ENCODE measurements at regions of chr9 and their contacts with region 1.

Region 1: DNA sequence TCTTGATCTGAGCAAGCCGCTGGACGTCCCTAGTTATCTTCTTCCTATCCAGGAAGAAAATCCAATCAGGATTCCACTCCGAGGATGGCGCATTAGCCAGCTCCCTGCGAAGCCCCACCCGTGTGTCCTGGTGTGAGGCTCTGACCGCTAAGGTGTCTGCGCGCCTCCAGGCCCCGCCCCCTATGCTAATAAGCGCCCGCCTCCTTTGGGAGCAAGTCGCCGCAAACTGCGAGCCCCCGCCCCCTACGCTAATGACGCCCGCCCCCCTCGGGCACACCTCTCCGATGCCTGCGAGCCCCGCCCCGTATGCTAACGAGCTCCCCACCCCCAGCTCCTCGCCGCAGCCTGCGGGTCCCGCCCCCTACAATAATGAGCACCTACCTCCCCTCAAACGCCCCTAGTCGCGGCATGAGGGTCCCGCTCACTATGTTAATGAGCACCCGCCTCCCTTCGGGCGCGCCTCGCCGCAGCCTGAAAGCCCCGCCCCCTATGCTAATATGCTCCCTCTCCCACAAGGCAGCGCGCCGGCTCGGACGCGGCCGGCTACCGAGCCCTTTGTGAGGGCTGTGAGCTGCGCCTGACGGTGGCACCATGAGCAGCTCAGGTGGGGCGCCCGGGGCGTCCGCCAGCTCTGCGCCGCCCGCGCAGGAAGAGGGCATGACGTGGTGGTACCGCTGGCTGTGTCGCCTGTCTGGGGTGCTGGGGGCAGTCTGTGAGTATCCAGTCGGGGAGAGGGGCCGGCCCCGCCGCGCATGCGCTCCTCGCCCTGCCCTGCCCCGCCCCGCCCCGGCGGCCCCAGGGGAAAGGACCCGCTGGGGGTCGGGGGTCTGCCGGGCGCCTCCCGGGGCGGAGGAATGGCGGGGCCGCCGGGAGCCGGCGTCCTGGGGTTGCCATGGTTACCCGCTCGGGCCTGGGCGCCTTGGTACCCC is at the start of gene CACFD1:
- DNase-seq: peak; percentile 99
- ATAC-seq: peak; percentile 88
- H3K4me3 Mint-ChIP-seq: peak within 1 kb of the TSS; percentile 82
- H3K27ac Mint-ChIP-seq: peak within 1 kb of the TSS; percentile 96
- H3K4me1 Mint-ChIP-seq: peaks cover 31% of the 10 kb centered on the region
- H3K27me3 Mint-ChIP-seq: no peaks in the 10 kb centered on the region
- CTCF ChIP-seq: no peak
- total RNA-seq, gene CACFD1: 22.5 to 38.7 TPM (median 29.5 TPM) in 3 replicates

Region 2: DNA sequence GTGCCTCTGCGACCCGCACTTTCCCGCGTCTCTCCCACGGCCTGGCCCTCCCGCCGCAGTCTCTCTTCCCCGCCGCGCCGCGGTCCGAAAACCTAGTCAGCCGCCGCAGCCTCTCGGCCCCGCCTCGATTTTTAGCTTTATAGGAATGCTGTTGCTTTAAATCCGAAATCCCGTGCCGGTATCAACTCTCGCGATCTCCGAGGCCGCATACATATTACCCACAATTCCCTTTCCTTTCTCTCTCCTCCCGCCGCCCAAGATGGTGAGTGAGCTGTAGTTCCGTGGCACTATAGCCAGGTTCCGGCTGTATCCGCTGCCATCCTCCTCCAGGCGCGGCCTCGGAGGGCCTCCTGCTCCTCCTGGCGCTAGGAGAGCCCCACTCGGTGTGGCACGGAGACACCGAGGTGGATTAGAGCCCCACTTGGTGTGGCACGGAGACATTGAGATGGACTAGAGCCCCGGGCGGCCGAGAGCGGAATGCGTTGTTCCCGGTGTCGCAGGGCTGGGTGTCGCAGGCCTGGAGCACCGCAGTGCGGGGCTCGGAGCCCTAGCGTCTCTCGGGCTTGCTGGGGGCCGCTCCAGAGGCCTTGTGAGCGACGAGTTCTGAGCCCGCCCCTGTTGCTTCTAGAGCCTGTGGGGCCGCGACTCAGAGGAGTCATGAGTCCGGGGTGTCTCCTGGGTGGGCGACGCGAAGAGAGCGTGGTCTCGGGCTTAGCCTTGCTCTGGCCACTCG is 111.6 kb before region 1 on chr9 and contains the starts of genes MED22 and RPL7A:
- CTCF ChIA-PET with region 1: no interaction called
- POLR2A ChIA-PET with region 1: interaction called, 10 read pairs
- DNase-seq: peak; percentile 91
- ATAC-seq: peak; percentile 45
- H3K4me3 Mint-ChIP-seq: peak within 1 kb of the TSS; percentile 99
- H3K27ac Mint-ChIP-seq: peak within 1 kb of the TSS; percentile 96
- H3K4me1 Mint-ChIP-seq: peaks cover 26% of the 10 kb centered on the region
- H3K27me3 Mint-ChIP-seq: no peaks in the 10 kb centered on the region; the same call in 1 of the 2 replicates
- CTCF ChIP-seq: no peak
- total RNA-seq, gene MED22: 51.2 to 59.5 TPM (median 55.3 TPM) in 3 replicates
- total RNA-seq, gene RPL7A: 2,747 to 3,149 TPM (median 3,142 TPM) in 3 replicates

Region 3: DNA sequence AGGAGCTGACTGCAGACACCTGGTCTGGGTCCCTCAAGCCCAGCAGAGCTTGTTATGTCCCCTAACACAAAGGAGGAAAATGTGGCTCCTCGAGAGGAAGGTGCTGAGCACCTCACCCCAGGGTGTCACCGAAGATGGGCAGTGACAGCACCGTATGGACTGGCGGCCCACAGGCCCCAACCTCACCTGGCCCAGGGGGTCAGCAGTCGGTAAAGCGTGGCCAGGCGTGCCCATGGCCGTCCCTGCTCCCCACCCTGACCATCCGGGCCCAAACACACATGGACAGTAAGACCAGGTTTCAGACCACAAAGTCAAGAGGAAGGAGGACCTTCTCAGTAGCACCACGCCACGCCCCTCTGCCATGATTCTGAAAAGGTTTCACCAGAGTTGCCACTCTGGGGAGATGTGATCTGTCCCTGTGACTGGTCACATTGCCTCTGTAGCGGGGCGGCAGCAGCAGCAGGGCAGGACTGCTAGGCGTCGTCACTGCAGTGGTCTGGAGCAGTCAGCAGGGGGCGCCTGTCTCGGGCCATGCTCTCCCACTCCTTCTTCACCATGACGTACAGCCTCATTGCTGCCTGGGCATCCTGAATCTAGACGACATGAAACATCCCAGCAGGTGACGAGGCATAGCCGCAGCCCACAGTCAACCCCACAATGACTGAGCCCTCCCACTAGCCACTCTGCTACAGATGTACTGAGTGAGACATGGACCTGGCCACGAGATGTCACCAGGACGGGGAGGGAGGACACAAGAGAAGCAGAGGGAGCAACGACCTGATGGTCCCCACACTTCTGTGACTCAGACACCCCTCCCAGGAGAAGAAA is 53.0 kb before region 1 on chr9:
- CTCF ChIA-PET with region 1: no interaction called
- POLR2A ChIA-PET with region 1: no interaction called
- DNase-seq: peak; percentile 86
- ATAC-seq: peak; percentile 86
- H3K4me3 Mint-ChIP-seq: no peak overlapping the region
- H3K27ac Mint-ChIP-seq: peak overlapping the region; percentile 82
- H3K4me1 Mint-ChIP-seq: no peaks in the 10 kb centered on the region
- H3K27me3 Mint-ChIP-seq: no peaks in the 10 kb centered on the region
- CTCF ChIP-seq: peak; percentile 92

Region 4: DNA sequence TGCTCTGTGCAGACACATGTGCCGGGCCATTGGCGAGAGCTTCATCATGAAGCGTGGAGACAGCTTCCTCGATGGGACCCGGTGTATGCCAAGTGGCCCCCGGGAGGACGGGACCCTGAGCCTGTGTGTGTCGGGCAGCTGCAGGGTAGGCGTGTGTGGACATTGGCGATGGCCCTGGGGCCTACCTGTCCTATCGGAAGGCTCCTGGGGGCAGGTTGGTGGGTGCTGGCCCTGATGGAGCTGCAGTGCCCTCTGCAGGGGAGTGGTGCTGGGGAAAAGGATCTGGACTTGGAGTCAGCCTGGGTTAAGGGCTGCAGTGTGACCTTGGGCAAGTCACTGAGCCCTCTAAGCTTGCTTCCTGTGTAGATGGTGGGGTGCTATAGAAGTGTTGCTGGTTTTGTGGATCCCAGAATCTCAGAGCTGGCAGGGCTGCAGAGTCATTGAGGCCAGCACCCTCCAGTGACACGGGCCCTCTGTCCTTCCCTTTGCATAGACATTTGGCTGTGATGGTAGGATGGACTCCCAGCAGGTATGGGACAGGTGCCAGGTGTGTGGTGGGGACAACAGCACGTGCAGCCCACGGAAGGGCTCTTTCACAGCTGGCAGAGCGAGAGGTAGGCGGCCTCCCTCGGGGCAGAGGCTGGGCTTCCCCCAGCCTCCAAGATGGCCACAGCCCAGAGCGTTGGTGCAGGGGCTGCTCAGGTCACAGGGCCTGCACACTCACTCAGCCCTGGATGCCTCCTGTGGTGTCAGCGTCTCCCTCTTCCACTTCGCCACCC is 21.8 kb before region 1 on chr9:
- CTCF ChIA-PET with region 1: interaction called, 15 read pairs
- POLR2A ChIA-PET with region 1: no interaction called
- DNase-seq: peak; percentile 63
- ATAC-seq: peak; percentile 82
- H3K4me3 Mint-ChIP-seq: no peak overlapping the region
- H3K27ac Mint-ChIP-seq: no peak overlapping the region
- H3K4me1 Mint-ChIP-seq: no peaks in the 10 kb centered on the region
- H3K27me3 Mint-ChIP-seq: no peaks in the 10 kb centered on the region
- CTCF ChIP-seq: no peak

Region 5: GRCh38 chr9:133478851-133479711 is 19.3 kb after region 1 on chr9 and contains the start of gene SLC2A6:
- CTCF ChIA-PET with region 1: interaction called, 17 read pairs
- POLR2A ChIA-PET with region 1: interaction called, 3 read pairs
- DNase-seq: peak; percentile 91
- ATAC-seq: peak; percentile 97
- H3K4me3 Mint-ChIP-seq: peak within 1 kb of the TSS; percentile 74
- H3K27ac Mint-ChIP-seq: peak within 1 kb of the TSS; percentile 53; the same call in 1 of the 2 replicates
- H3K4me1 Mint-ChIP-seq: peaks cover 13% of the 10 kb centered on the region
- H3K27me3 Mint-ChIP-seq: peaks cover 7% of the 10 kb centered on the region
- CTCF ChIP-seq: no peak
- total RNA-seq, gene SLC2A6: 13.4 to 16.6 TPM (median 14.2 TPM) in 3 replicates

Region 6: GRCh38 chr9:133589454-133590227 is 129.9 kb after region 1 on chr9:
- CTCF ChIA-PET with region 1: no interaction called
- POLR2A ChIA-PET with region 1: no interaction called
- DNase-seq: peak; percentile 79
- ATAC-seq: peak; percentile 78
- H3K4me3 Mint-ChIP-seq: no peak overlapping the region
- H3K27ac Mint-ChIP-seq: no peak overlapping the region
- H3K4me1 Mint-ChIP-seq: peaks cover 14% of the 10 kb centered on the region
- H3K27me3 Mint-ChIP-seq: peaks cover 6% of the 10 kb centered on the region; the same call in 1 of the 2 replicates
- CTCF ChIP-seq: peak; percentile 92

Region 7: GRCh38 chr9:133897648-133898047 is 437.9 kb after region 1 on chr9:
- CTCF ChIA-PET with region 1: no interaction called
- POLR2A ChIA-PET with region 1: no interaction called
- DNase-seq: no peak
- ATAC-seq: no peak
- H3K4me3 Mint-ChIP-seq: no peak overlapping the region
- H3K27ac Mint-ChIP-seq: no peak overlapping the region
- H3K4me1 Mint-ChIP-seq: peaks cover 14% of the 10 kb centered on the region
- H3K27me3 Mint-ChIP-seq: no peaks in the 10 kb centered on the region
- CTCF ChIP-seq: no peak